ENCODE measurements at regions of chr5 and their contacts with region 1.

Region 1: GRCh38 chr5:150700594-150701293 is at the start of gene RBM22:
- DNase-seq: peak; percentile 94
- H3K4me3 Mint-ChIP-seq: no peak within 1 kb of the TSS
- H3K27ac Mint-ChIP-seq: no peak within 1 kb of the TSS
- H3K4me1 Mint-ChIP-seq: no peaks in the 10 kb centered on the region
- H3K27me3 Mint-ChIP-seq: no peaks in the 10 kb centered on the region
- CTCF ChIP-seq: peak; percentile 65
- total RNA-seq, gene RBM22: 53.4 and 60.8 TPM in 2 replicates

Region 2: DNA sequence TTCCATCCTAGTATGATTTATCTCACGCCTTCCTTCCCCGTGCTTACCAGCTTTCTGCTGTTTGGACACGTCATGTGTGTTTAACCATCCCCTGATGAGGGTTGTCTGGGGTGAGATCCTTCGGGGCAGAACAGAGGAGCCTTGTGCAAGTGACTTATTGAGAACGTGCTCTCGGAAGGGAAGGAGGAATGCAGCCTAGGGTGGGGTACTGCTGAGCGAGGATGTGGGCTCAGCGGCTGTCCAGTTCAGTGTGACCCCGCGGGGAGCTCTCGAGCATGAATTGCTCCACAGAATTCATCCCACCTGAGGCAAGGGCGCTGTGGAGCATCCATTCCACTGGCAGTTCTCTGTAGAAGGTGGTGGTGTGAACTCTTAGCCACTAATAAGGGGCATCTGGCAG is 35.7 kb before region 1 on chr5:
- CTCF ChIA-PET with region 1: interaction called, 3 read pairs
- intact Hi-C with region 1: loop called (anchors 2 kb)
- DNase-seq: peak; percentile 56
- H3K4me3 Mint-ChIP-seq: peak overlapping the region; percentile 11
- H3K27ac Mint-ChIP-seq: no peak overlapping the region
- H3K4me1 Mint-ChIP-seq: no peaks in the 10 kb centered on the region
- H3K27me3 Mint-ChIP-seq: peaks cover 51% of the 10 kb centered on the region
- CTCF ChIP-seq: no peak

Region 3: GRCh38 chr5:150778517-150779396 is 78.0 kb after region 1 on chr5 and contains the start of gene SMIM3:
- CTCF ChIA-PET with region 1: interaction called, 10 read pairs
- intact Hi-C with region 1: no loop called
- DNase-seq: peak; percentile 83
- H3K4me3 Mint-ChIP-seq: peak within 1 kb of the TSS; percentile 98
- H3K27ac Mint-ChIP-seq: peak within 1 kb of the TSS; percentile 69
- H3K4me1 Mint-ChIP-seq: peaks cover 33% of the 10 kb centered on the region
- H3K27me3 Mint-ChIP-seq: no peaks in the 10 kb centered on the region
- CTCF ChIP-seq: no peak
- total RNA-seq, gene SMIM3: 6.9 and 8.4 TPM in 2 replicates

Region 4: DNA sequence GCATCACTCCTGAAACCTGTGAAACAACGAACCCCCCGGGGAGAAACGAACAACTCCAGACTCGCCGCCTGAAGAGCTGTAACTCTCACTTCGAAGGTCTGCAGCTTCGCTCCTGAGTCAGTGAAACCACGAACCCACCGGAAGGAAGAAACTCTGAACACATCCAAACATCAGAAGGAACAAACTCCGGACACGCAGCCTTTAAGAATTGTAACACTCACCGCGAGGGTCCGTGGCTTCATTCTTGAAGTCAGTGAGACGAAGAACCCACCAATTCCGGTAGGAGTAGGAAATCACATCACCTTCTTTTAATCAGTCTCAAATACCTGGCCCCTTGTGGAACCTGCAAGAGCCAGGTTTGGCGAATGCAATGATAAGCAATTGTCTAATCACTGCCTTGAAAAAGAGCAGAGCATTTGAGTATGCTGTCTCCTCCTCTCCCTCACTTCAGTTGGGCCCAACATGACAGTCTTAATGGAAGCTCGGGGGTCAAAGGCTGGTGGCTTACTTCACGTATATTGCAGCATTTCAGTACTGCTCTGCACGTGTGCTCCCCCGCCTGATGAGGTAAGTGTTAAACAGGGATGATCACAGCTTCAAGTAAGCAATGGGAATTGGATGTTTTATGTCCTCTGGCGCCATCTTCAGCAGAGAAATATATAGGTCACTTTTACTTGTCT is 146.1 kb after region 1 on chr5:
- CTCF ChIA-PET with region 1: interaction called, 4 read pairs
- intact Hi-C with region 1: loop called (anchors 1 kb)
- DNase-seq: peak; percentile 53
- H3K4me3 Mint-ChIP-seq: no peak overlapping the region
- H3K27ac Mint-ChIP-seq: no peak overlapping the region
- H3K4me1 Mint-ChIP-seq: no peaks in the 10 kb centered on the region
- H3K27me3 Mint-ChIP-seq: peaks cover 66% of the 10 kb centered on the region
- CTCF ChIP-seq: peak; percentile 50